Dorsolateral prefrontal cortex (tissue), 120 donors: ENCODE measurements at regions of chr10 and their contacts with region 1.

Region 1: DNA sequence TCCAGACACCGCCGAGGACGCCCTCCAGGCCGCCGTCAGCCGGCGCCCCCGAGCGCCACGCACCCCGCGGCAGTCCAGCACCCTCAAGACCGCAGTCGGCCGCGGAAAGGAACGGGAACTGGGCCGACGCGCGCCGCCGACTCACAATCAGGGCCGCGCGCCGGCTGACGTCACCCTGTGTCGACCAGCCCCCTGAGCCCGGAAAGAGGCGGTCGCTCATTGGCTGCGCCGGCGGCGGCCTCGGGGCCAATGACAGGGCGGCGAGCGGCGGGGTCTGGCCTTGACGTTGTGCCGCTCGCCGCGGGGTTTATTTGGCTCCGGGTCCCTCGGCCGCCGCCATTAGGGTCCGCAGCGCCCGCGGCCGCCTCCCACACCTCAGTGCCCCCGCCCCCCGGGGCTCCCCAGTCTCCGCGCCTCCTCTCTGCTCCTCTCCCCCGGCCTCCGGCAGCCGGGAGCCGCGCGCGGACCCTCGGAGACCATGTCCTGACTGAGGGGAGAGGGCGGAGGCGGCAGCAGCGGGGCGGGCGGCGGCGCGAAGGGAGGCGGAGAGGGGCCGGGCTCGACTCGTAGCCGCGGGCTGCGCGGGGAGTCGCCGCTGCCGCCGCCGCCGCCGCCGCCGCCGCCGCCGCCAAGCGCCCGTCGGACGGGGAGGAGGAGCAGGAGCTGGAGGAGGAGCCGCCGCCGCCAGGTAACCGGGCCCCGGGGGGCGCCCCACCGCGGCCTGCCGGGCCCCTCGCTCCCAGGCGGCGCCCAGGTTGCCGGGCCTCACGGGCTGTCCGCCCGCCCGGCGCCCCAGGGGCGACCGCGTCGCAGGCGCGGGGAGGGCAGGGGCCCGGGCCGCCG is 25.1 kb upstream of the ZRANB1 start:
- DNase-seq: peak; percentile 92 to 98 (median 97)
- H3K4me3 ChIP-seq: peak overlapping the region; percentile 55 to 97 (median 84)
- H3K27ac ChIP-seq: peak overlapping the region; percentile 85 to 99 (median 94)
- H3K27me3 ChIP-seq: no peaks in the 10 kb centered on the region
- CTCF ChIP-seq: peak in 36 of 56 donors; percentile 11 to 62 (median 31)

Region 2: GRCh38 chr10:124522933-124523871 is 393.6 kb before region 1 on chr10:
- intact Hi-C with region 1: loop called in 1 of 2 experiments (anchors 10 kb)
- DNase-seq: peak in 1 of 10 donors; percentile 29
- H3K4me3 ChIP-seq: peak overlapping the region in 9 of 59 donors; percentile 3 to 36 (median 33)
- H3K27ac ChIP-seq: peak overlapping the region in 53 of 59 donors; percentile 5 to 85 (median 70)
- H3K27me3 ChIP-seq: no peaks in the 10 kb centered on the region
- CTCF ChIP-seq: no peak

Region 3: DNA sequence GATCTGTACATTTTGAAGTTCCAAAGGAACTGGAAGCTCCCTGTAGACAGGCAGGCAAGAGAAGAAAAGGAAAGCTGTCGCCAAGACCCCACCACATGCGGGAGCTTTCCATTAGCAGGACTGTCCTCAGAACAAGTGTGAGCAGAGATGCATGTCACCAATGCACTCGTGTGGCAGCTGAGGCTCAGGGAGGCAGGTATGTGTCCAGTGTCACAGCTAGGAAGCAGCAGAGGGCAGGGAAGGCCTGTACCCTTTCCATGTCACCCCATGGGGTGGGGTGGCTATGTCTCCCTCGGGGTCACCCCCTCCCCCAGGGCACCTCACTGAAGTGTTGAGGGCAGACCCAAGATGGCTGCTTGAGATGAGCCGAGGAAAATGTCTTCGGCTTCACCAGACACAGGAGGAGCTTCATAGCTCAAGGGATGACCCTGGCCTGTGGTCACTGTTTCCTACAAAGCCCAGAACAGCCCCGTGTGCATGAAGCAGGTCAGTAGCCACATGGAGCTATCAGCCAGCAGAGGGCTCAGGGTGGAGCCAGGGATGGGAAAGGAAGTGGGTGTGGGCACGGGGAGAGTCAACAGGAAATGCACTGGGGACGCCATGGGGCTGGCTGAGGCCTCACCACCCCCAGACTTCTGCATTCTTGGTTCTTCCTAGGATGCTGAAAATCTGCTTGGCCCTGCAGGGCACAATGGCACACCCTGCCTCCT is 269.2 kb before region 1 on chr10:
- intact Hi-C with region 1: no loop called
- DNase-seq: peak in 1 of 10 donors; percentile 68
- H3K4me3 ChIP-seq: peak overlapping the region in 1 of 59 donors; percentile 27
- H3K27ac ChIP-seq: peak overlapping the region; percentile 79 to 99 (median 95)
- H3K27me3 ChIP-seq: no peaks in the 10 kb centered on the region
- CTCF ChIP-seq: peak in 37 of 56 donors; percentile 11 to 48 (median 29)

Region 4: DNA sequence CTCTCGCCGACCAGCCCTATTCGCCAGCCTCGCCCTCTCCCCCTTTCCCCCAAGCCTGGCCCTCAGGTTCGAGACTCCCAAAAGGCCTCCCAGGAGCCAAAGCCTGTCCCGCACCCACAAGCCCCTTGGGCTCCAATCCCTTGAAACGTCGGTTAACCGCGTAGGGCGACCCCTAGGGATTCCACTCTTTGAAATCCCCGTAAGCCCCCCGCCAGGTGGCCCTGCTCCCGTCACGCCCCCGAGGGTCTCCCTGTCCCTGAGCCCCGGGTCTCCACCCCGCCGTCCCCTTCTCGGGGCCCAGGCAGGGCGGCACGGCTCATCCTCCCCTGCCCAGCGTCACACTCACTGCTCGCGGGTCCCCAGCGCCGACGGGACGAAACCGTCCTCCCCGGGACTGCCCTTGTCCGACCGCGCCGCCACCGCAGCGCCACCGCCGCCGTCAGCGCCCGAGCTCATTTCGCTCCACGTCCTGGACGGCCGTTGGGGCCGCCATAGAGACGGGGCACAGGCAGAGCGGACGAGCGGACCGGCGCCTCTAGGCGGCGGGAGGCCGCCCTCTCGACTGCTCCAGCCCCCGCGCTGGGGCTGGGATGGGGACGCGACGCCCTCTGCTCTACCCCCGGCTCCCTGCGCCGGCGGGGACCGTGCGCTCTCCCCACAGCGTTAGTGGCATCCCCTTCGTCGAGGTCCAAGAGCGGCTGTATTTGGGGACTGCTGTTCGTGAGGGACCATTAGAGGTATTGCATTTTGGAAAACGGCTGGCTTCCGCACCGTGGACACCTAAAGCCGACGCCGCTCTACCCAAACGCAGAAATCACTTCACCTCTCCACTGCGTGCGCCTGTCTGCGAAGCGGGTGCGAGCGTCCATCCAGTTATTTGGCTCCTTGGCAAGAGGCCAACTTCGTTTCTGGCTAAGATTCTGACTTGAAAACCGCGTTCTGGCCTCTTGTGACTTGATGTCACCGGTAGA is 125.1 kb before region 1 on chr10 and contains the start of gene EEF1AKMT2:
- intact Hi-C with region 1: loop called in 1 of 2 experiments (anchors 5 kb)
- DNase-seq: peak; percentile 62 to 88 (median 80)
- H3K4me3 ChIP-seq: peak within 1 kb of the TSS; percentile 61 to 100 (median 93)
- H3K27ac ChIP-seq: peak within 1 kb of the TSS; percentile 48 to 95 (median 86)
- H3K27me3 ChIP-seq: no peaks in the 10 kb centered on the region
- CTCF ChIP-seq: peak in 54 of 56 donors; percentile 10 to 81 (median 56)
- total RNA-seq, gene EEF1AKMT2: 17.5 to 38.9 (median 26.4) TPM

Region 5: DNA sequence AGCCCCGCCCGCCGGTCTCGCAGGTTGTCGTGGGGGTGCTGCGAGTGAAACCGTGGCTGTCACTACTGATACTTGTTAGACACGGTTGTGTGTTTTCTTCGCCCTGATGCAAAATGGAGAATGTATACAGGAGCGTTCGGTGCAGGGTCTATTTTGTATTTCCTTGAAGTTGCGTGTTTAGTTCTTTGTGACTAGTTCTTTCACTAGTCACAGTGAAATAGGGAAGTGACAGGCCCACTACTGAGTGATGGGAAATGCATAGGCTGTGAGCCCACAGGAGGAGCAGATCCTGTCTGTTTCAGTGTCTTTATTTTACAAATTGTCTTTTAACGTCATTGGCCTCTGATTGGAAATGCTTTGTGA is 114.5 kb before region 1 on chr10:
- intact Hi-C with region 1: loop called in 1 of 2 experiments (anchors 5 kb)
- DNase-seq: no peak
- H3K4me3 ChIP-seq: peak overlapping the region; percentile 59 to 100 (median 96)
- H3K27ac ChIP-seq: peak overlapping the region in 47 of 59 donors; percentile 59 to 96 (median 86)
- H3K27me3 ChIP-seq: no peaks in the 10 kb centered on the region
- CTCF ChIP-seq: no peak

Region 6: DNA sequence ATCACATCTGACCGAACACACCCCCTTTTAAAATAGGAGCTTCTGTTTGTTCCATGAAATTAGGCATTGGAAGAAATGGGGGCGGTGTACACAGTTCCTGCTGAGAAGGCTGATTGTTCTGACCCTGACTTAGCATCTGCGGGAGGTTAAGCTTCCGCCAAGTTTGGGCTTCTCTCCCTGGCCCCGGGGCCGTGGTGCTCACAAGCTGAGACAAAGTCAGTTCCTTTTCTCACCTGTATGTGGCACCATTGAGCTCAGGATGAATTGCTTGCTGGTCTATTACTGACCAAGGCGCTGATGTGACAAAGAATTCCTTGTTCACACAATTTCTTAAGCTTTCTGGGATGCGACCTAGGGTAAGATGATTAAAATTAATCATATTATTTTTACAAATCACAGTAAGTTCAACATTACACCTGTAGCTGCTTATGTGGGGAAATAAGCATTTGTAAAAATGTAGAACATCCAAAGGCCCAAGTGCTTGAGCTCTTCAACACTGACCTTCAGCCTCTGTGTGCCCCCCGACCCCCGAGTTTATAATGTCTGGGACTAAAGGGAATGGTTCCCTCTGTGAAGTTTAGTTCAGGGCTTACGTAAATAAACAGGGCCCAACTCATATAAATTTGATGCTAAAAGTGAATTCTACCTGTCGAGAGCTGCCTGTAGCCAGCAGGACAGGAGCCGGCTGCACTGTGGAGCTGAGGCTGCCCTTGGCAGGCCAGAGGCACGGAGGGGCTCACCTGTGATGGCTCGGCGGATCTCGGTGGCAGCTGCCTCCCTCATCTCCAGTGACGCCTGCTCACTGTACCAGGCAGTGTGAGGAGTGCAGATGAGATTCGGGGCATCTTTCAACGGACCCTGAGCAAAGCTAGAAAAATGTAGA is 75.9 kb after region 1 on chr10:
- intact Hi-C with region 1: loop called in 1 of 2 experiments (anchors 5 kb)
- DNase-seq: peak in 6 of 10 donors; percentile 63 to 81 (median 72)
- H3K4me3 ChIP-seq: no peak overlapping the region
- H3K27ac ChIP-seq: peak overlapping the region in 55 of 59 donors; percentile 1 to 95 (median 79)
- H3K27me3 ChIP-seq: no peaks in the 10 kb centered on the region
- CTCF ChIP-seq: peak; percentile 59 to 91 (median 83)

Region 7: GRCh38 chr10:125144693-125145623 is 228.2 kb after region 1 on chr10:
- intact Hi-C with region 1: loop called in 1 of 2 experiments (anchors 10 kb)
- DNase-seq: peak in 3 of 10 donors; percentile 42 to 56 (median 51)
- H3K4me3 ChIP-seq: peak overlapping the region in 9 of 59 donors; percentile 0 to 36 (median 10)
- H3K27ac ChIP-seq: peak overlapping the region in 23 of 59 donors; percentile 12 to 70 (median 40)
- H3K27me3 ChIP-seq: no peaks in the 10 kb centered on the region
- CTCF ChIP-seq: peak in 55 of 56 donors; percentile 21 to 70 (median 49)

Region 8: DNA sequence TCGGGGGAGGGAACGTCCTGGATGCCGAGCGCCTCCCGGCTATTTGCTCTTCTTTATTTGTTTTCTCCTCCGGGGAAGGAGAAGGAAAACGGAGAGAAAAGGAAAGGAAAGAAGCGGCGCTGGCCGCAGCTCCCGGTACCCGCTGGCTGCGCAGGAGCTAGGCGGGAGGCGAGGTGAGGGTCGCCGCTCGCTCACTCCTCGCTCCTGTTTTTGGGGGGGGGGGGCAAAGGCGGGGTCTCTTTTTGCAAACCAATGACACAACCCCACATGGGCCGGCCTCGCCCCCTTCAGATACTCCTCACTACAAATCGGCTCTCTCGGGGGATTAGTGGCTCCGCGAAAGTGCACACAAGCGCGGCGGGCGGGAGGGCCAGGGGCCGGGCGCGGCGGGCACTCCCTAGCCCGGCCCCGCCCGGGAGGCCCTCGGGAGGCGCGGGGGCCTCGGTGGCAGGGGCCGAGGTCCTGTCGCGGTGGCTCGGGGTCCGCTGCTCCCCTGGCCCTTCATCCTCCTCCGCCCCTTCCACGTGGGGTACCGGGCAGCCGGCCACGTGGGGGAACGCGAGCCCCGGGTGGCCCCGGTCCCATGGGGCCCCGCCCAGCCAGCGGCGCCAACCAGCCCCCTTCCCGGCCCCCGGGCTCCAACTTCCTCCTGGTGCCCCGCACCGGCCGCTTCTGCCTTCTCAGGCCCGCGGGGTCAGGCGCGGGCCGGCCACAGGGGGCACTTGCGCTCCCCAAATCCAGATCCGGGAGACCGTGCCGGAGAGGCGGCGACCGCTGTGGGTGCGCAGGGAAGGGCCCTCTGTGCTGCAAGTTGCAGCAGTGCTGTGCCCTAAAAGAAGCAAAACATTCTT is 244.3 kb after region 1 on chr10:
- intact Hi-C with region 1: loop called in 1 of 2 experiments (anchors 5 kb)
- DNase-seq: peak in 9 of 10 donors; percentile 49 to 79 (median 67)
- H3K4me3 ChIP-seq: peak overlapping the region; percentile 48 to 87 (median 75)
- H3K27ac ChIP-seq: peak overlapping the region in 57 of 59 donors; percentile 36 to 98 (median 86)
- H3K27me3 ChIP-seq: no peaks in the 10 kb centered on the region
- CTCF ChIP-seq: peak in 54 of 56 donors; percentile 11 to 75 (median 54)

Region 9: GRCh38 chr10:125878957-125879835 is 962.4 kb after region 1 on chr10:
- intact Hi-C with region 1: no loop called
- DNase-seq: no peak
- H3K4me3 ChIP-seq: no peak overlapping the region
- H3K27ac ChIP-seq: no peak overlapping the region
- H3K27me3 ChIP-seq: no peaks in the 10 kb centered on the region
- CTCF ChIP-seq: no peak